Mammary epithelial cell (primary cell): ENCODE measurements at regions of chr1 and their contacts with region 1.

Region 1: GRCh38 chr1:235423191-235423652 is 56.0 kb downstream of the TBCE start:
- DNase-seq: no peak
- H3K4me3 ChIP-seq: no peak overlapping the region
- H3K27ac ChIP-seq: no peak overlapping the region
- H3K4me1 ChIP-seq: no peaks in the 10 kb centered on the region
- H3K27me3 ChIP-seq: no peaks in the 10 kb centered on the region
- CTCF ChIP-seq: no peak

Region 2: DNA sequence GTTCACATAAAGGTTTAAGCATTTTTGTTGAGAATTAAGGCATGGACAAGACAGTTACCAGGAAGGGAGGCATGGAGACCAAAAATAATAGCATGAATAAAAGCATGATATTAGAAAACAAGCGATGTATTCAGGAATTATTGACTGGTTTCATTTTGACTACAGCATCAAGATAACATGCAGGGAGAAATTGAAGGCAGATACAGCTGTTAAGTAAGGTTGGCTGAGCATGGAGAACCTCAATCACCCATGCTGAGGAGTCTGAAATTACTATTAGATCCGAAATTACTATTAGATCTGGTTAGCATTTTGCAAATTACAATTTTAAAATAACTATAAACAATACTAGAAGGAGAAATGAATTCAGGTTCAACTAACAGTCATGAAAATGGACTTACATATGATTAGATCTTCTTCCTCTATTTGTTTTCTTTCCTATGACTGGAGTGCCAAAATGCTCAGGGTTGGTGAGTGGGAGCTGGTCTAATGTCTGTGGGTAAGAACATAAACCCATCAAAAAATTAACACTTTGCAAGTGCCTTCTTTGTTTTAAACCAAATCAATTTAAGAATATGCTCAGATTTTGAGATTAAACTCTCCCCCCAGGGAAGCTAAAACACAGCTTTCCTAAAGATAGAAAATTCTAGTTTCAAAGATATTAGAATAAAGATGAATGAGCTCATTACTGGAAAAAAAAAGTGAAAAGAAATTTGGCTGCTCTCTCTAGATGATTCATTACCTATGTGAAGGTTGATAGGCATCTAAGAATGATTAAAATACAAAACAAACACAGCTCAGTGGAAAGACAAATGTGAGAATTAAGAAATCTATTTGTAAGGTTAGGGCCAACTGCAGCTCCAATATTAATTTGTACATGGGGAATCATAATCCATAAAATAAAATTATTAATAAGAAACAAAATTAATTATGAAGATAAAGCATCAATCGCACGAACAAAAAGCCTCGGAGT is 176.9 kb before region 1 on chr1:
- CTCF ChIA-PET with region 1: no interaction called
- dilution Hi-C with region 1: no loop called
- in situ Hi-C with region 1: loop called (anchors 5 kb)
- intact Hi-C with region 1: no loop called
- DNase-seq: peak; percentile 14
- H3K4me3 ChIP-seq: no peak overlapping the region
- H3K27ac ChIP-seq: no peak overlapping the region
- H3K4me1 ChIP-seq: no peaks in the 10 kb centered on the region
- H3K27me3 ChIP-seq: no peaks in the 10 kb centered on the region
- CTCF ChIP-seq: no peak